ENCODE measurements at regions of chr11 and their contacts with region 1.

Region 1: GRCh38 chr11:130002846-130003716 is 446 bp upstream of the PRDM10 start:
- DNase-seq: peak; percentile 95
- H3K4me3 ChIP-seq: peak overlapping the region; percentile 70 to 95 (median 79)
- H3K27ac ChIP-seq: peak overlapping the region; percentile 100
- H3K4me1 ChIP-seq: peaks cover 18% of the 10 kb centered on the region
- H3K27me3 ChIP-seq: no peaks in the 10 kb centered on the region
- CTCF ChIP-seq: no peak

Region 2: DNA sequence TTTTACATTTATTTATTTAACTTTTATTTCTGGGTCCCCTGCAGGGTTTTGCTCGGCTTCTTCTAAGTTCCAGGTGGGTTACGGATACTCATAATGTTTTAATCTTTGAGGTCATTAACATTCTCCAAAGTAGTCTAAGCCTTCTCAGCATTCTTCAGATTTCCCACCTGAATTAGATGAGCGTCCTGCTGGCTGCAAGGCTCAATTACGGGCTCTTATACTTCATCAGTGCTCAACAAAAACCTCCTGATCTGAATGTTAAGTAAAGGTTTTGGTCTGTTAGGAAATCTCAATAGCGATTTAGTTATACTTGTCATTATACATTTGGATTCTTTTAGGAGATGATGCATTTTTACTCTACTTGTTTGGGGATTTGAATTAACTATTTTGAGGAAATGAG is 80.4 kb before region 1 on chr11:
- CTCF ChIA-PET with region 1: no interaction called
- dilution Hi-C with region 1: no loop called
- in situ Hi-C with region 1: no loop called
- intact Hi-C with region 1: loop called (anchors 1 kb)
- DNase-seq: no peak
- H3K4me3 ChIP-seq: no peak overlapping the region
- H3K27ac ChIP-seq: no peak overlapping the region
- H3K4me1 ChIP-seq: no peaks in the 10 kb centered on the region
- H3K27me3 ChIP-seq: no peaks in the 10 kb centered on the region
- CTCF ChIP-seq: no peak

Region 3: GRCh38 chr11:130022798-130023583 is 19.9 kb after region 1 on chr11:
- CTCF ChIA-PET with region 1: no interaction called
- dilution Hi-C with region 1: no loop called
- in situ Hi-C with region 1: no loop called
- intact Hi-C with region 1: loop called (anchors 2 kb)
- DNase-seq: peak; percentile 74
- H3K4me3 ChIP-seq: no peak overlapping the region
- H3K27ac ChIP-seq: peak overlapping the region; percentile 18
- H3K4me1 ChIP-seq: peaks cover 18% of the 10 kb centered on the region
- H3K27me3 ChIP-seq: no peaks in the 10 kb centered on the region
- CTCF ChIP-seq: no peak

Region 4: DNA sequence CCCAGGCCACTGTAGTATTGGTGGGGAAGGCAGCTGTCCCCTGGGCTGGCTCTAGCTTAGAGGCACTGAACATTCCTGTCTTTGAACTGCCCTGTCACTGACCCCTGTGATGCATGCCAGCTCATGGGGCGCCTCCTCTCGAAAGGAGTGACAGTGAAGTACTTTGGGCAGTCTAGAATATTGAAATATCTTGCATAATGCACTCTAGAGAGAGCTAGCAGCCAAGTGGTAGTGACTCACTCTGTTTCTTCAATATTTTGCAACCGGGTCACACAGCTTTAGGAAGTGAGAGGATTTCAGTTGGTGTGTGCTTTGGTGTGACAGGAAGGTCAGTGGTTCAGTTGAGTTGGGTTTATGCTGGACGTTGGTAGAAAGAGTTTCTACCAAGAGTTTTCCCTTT is 121.0 kb after region 1 on chr11:
- CTCF ChIA-PET with region 1: no interaction called
- dilution Hi-C with region 1: no loop called
- in situ Hi-C with region 1: no loop called
- intact Hi-C with region 1: loop called (anchors 1 kb)
- DNase-seq: peak; percentile 89
- H3K4me3 ChIP-seq: no peak overlapping the region
- H3K27ac ChIP-seq: peak overlapping the region; percentile 21
- H3K4me1 ChIP-seq: peaks cover 40% of the 10 kb centered on the region
- H3K27me3 ChIP-seq: no peaks in the 10 kb centered on the region
- CTCF ChIP-seq: peak in 1 of 2 donors; percentile 16

Region 5: DNA sequence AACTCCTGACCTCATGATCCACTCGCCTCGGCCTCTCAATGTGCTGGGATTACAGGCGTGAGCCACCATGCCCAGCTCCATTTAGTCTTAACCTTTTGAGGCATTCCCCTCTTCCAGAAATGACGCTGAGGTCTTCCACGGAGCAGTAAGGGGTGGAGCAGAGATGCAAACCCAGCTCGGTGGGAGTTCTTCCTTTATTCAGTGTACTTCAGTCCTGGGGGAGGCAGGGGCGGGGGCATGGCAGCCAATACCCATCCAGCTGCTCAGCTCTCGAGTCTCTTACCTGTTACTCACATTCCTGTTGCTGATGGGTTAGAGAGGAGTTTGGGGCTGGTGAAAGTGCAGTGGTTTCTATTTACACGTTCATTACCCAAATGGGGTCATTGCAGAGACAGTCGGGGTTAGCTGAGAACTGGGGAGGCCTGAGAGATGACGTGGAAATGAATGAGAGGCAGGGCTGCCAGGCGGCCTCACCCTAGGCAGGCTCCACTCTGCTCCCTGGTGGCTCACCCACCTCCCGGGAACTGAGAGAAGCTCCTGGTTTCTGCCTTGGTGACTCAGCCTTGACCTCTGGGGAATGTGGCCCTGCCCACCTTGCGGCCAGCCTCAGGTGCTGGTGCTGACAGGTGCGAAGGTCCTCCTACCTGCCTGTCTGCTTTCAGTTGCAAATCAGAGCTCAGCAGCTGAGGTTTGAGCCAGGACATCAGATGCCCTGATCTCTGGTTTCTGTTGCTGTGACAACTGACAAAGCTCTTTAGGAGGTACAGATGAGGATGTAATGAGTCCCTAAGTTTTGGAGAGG is 143.1 kb after region 1 on chr11:
- CTCF ChIA-PET with region 1: no interaction called
- dilution Hi-C with region 1: no loop called
- in situ Hi-C with region 1: no loop called
- intact Hi-C with region 1: loop called (anchors 1 kb)
- DNase-seq: peak; percentile 99
- H3K4me3 ChIP-seq: no peak overlapping the region
- H3K27ac ChIP-seq: peak overlapping the region; percentile 76
- H3K4me1 ChIP-seq: peaks cover 12% of the 10 kb centered on the region
- H3K27me3 ChIP-seq: no peaks in the 10 kb centered on the region
- CTCF ChIP-seq: peak; percentile 42 to 73